ENCODE measurements at regions of chr5 and their contacts with region 1.

Region 1: GRCh38 chr5:139022528-139022927 is 147.4 kb upstream of the LRRTM2 start:
- DNase-seq: peak; percentile 37 to 70
- H3K4me3 ChIP-seq: no peak overlapping the region
- H3K27ac ChIP-seq: no peak overlapping the region
- H3K4me1 ChIP-seq: peaks cover 6% of the 10 kb centered on the region; the same call in 1 of the 2 replicates
- H3K27me3 ChIP-seq: no peaks in the 10 kb centered on the region
- CTCF ChIP-seq: no peak

Region 2: GRCh38 chr5:139012170-139012569 is 10.4 kb before region 1 on chr5:
- CTCF ChIA-PET with region 1: no interaction called
- POLR2A ChIA-PET with region 1: interaction called, 10 read pairs
- intact Hi-C with region 1: no loop called
- DNase-seq: no peak
- H3K4me3 ChIP-seq: no peak overlapping the region
- H3K27ac ChIP-seq: no peak overlapping the region
- H3K4me1 ChIP-seq: peaks cover 20% of the 10 kb centered on the region
- H3K27me3 ChIP-seq: no peaks in the 10 kb centered on the region
- CTCF ChIP-seq: no peak